Right ventricle myocardium superior (tissue), 1 donor: ENCODE measurements at regions of chr9 and their contacts with region 1.

Region 1: GRCh38 chr9:32590898-32591297 is 17.9 kb upstream of the NDUFB6 start:
- DNase-seq: no peak
- ATAC-seq: no peak

Region 2: DNA sequence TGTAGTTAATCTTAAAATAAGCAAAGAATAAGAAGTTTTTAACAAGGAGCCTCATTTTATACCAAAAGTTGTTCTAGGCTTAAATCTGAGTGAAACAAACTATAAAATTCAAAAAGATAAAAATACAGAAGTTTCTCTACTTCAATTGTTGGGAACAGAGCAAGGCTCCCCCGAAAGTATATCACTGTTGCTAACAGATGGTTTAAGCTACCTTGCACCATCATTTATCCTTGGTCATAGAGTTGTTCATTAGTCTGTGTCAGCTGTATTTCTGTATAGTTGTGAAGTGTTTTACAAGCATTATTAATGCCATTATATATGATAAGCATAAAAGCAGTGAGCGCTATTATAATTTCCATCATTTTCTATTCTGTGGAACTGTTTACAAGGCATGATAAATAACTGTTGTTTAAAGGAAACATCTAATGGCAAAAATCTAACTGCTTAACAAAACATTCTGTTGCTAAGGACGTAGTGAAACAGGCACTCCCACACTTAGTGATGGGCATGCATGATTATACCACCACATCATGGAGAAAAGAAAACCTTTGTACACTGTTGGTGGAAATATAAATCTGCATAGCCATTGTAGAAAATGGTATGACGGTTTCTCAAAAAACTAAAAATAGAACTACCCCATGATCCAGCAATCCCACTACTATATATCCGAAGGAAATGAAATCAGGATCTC is 229.8 kb before region 1 on chr9:
- intact Hi-C with region 1: loop called (anchors 5 kb)
- DNase-seq: no peak
- ATAC-seq: no peak